Activated CD4-positive, alpha-beta T cell treated with anti-CD3 and anti-CD28 coated beads for 36 hours (primary cell): ENCODE measurements at regions of chr11 and their contacts with region 1.

Region 1: GRCh38 chr11:73931039-73931645 is 19.7 kb upstream of the DNAJB13 start:
- DNase-seq: peak; percentile 29
- ATAC-seq: peak; percentile 83
- H3K4me3 Mint-ChIP-seq: no peak overlapping the region
- H3K27ac Mint-ChIP-seq: no peak overlapping the region
- H3K4me1 Mint-ChIP-seq: no peaks in the 10 kb centered on the region
- H3K27me3 Mint-ChIP-seq: no peaks in the 10 kb centered on the region

Region 2: GRCh38 chr11:73633999-73634398 is 297.1 kb before region 1 on chr11:
- CTCF ChIA-PET with region 1: no interaction called
- POLR2A ChIA-PET with region 1: interaction called, 9 read pairs
- intact Hi-C with region 1: loop called (anchors 2 to 10 kb)
- DNase-seq: no peak
- ATAC-seq: no peak
- H3K4me3 Mint-ChIP-seq: no peak overlapping the region
- H3K27ac Mint-ChIP-seq: no peak overlapping the region
- H3K4me1 Mint-ChIP-seq: peaks cover 6% of the 10 kb centered on the region
- H3K27me3 Mint-ChIP-seq: no peaks in the 10 kb centered on the region

Region 3: DNA sequence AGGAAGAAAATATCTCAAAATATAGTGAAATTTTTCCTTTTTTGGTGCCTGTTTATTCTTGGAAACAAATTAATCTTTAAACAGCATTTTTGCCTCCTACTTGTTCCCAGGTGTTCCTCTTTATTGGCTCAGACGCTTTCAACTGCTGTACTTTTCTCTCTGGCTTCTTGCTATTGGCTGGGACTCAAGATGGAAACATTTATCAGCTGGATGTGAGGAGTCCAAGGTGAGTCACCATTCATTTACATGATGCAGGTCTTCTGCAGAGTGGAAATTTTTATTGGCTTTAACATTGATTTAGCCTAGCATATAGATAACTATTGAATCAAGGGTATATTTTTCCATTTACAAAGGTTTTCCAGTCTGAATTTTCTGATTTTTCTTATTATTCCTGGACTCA is 14.7 kb before region 1 on chr11:
- CTCF ChIA-PET with region 1: no interaction called
- POLR2A ChIA-PET with region 1: no interaction called
- intact Hi-C with region 1: no loop called
- DNase-seq: no peak
- ATAC-seq: peak; percentile 61
- H3K4me3 Mint-ChIP-seq: no peak overlapping the region
- H3K27ac Mint-ChIP-seq: no peak overlapping the region
- H3K4me1 Mint-ChIP-seq: peaks cover 3% of the 10 kb centered on the region
- H3K27me3 Mint-ChIP-seq: no peaks in the 10 kb centered on the region